OCI-LY7 (cell line): ENCODE measurements at regions of chr4 and their contacts with region 1.

Region 1: GRCh38 chr4:85798012-85798770 is 323.2 kb downstream of the ARHGAP24 start:
- DNase-seq: no peak
- H3K4me3 ChIP-seq: no peak overlapping the region
- H3K27ac ChIP-seq: no peak overlapping the region
- H3K4me1 ChIP-seq: peaks cover 6% of the 10 kb centered on the region
- CTCF ChIP-seq: no peak

Region 2: DNA sequence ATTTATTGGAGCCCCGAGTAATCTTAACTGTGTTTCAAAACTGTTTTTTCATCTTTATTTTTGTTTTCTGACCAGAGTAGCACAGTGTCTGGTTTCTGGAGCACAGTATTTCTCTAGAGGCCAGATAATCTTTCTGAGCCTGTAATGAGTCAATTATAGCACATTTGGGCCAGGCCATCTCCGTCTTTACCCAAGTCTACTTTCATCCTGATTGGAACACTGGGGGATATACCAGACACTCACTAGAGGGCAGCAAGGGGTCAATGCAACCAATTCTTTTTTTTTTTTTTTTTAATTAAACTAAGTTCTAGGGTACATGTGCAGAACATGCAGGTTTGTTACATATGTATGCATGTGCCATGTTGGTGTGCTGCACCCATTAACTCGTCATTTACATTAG is 41.3 kb before region 1 on chr4:
- CTCF ChIA-PET with region 1: no interaction called
- POLR2A ChIA-PET with region 1: interaction called, 6 read pairs
- intact Hi-C with region 1: loop called (anchors 2 kb)
- DNase-seq: peak; percentile 68
- H3K4me3 ChIP-seq: no peak overlapping the region
- H3K27ac ChIP-seq: no peak overlapping the region
- H3K4me1 ChIP-seq: no peaks in the 10 kb centered on the region
- CTCF ChIP-seq: peak; percentile 73

Region 3: GRCh38 chr4:85968945-85969819 is 171.0 kb after region 1 on chr4:
- CTCF ChIA-PET with region 1: no interaction called
- POLR2A ChIA-PET with region 1: no interaction called
- intact Hi-C with region 1: loop called (anchors 2 kb)
- DNase-seq: peak; percentile 49
- H3K4me3 ChIP-seq: no peak overlapping the region
- H3K27ac ChIP-seq: no peak overlapping the region
- H3K4me1 ChIP-seq: no peaks in the 10 kb centered on the region
- CTCF ChIP-seq: peak; percentile 85

Region 4: GRCh38 chr4:86043755-86044592 is 245.8 kb after region 1 on chr4:
- CTCF ChIA-PET with region 1: no interaction called
- POLR2A ChIA-PET with region 1: no interaction called
- intact Hi-C with region 1: loop called (anchors 5 kb)
- DNase-seq: peak; percentile 57
- H3K4me3 ChIP-seq: no peak overlapping the region
- H3K27ac ChIP-seq: no peak overlapping the region
- H3K4me1 ChIP-seq: no peaks in the 10 kb centered on the region
- CTCF ChIP-seq: peak; percentile 89